CD8-positive, alpha-beta memory T cell (primary cell): ENCODE measurements at regions of chr19 and their contacts with region 1.

Region 1: GRCh38 chr19:39119554-39120229 is 5.9 kb upstream of the PAK4 start:
- DNase-seq: no peak
- H3K4me3 ChIP-seq: no peak overlapping the region
- H3K4me3 Mint-ChIP-seq: no peak overlapping the region
- H3K27ac ChIP-seq: no peak overlapping the region
- H3K27ac Mint-ChIP-seq: no peak overlapping the region
- H3K4me1 ChIP-seq: no peaks in the 10 kb centered on the region
- H3K4me1 Mint-ChIP-seq: peaks cover 6 to 12% (median 11%) of the 10 kb centered on the region in 3 donors
- H3K27me3 ChIP-seq: no peaks in the 10 kb centered on the region
- H3K27me3 Mint-ChIP-seq: peaks cover 3 to 6% of the 10 kb centered on the region in 2 donors

Region 2: DNA sequence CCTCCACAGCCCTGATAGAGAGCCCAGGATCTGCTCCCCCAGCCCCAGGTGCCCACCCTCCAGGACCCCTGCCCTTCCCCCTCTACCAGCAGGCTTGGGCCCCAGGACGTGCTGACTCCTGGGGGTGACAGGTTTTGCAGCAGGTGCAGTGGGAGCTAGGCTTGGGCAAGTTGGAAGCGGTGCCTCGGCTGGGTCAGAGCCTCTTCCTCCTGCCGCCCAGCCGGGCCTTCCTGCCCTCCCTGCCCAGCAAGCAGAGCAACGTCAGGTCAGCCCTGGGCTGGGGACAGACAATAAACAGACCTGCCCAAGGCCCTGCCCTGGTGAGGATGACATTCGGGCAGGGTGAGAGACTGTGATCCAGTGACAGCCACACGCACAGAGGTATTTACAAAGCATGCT is 67.9 kb after region 1 on chr19:
- CTCF ChIA-PET with region 1: interaction called, 14 read pairs
- POLR2A ChIA-PET with region 1: no interaction called
- DNase-seq: no peak
- H3K4me3 ChIP-seq: no peak overlapping the region
- H3K4me3 Mint-ChIP-seq: no peak overlapping the region
- H3K27ac ChIP-seq: no peak overlapping the region
- H3K27ac Mint-ChIP-seq: no peak overlapping the region
- H3K4me1 ChIP-seq: no peaks in the 10 kb centered on the region
- H3K4me1 Mint-ChIP-seq: no peaks in the 10 kb centered on the region
- H3K27me3 ChIP-seq: no peaks in the 10 kb centered on the region
- H3K27me3 Mint-ChIP-seq: peaks cover 8 to 26% of the 10 kb centered on the region in 2 donors

Region 3: GRCh38 chr19:39328046-39328705 is 208.5 kb after region 1 on chr19:
- CTCF ChIA-PET with region 1: interaction called, 13 read pairs
- POLR2A ChIA-PET with region 1: interaction called, 3 read pairs
- DNase-seq: peak; percentile 64 to 87 (median 75)
- H3K4me3 ChIP-seq: no peak overlapping the region
- H3K4me3 Mint-ChIP-seq: peak overlapping the region in 4 of 7 donors; percentile 30 to 67 (median 63)
- H3K27ac ChIP-seq: no peak overlapping the region
- H3K27ac Mint-ChIP-seq: peak overlapping the region; percentile 47 to 97 (median 86)
- H3K4me1 ChIP-seq: peaks cover 49% of the 10 kb centered on the region
- H3K4me1 Mint-ChIP-seq: peaks cover 28 to 59% (median 48%) of the 10 kb centered on the region in 3 donors
- H3K27me3 ChIP-seq: no peaks in the 10 kb centered on the region
- H3K27me3 Mint-ChIP-seq: no peaks in the 10 kb centered on the region

Region 4: DNA sequence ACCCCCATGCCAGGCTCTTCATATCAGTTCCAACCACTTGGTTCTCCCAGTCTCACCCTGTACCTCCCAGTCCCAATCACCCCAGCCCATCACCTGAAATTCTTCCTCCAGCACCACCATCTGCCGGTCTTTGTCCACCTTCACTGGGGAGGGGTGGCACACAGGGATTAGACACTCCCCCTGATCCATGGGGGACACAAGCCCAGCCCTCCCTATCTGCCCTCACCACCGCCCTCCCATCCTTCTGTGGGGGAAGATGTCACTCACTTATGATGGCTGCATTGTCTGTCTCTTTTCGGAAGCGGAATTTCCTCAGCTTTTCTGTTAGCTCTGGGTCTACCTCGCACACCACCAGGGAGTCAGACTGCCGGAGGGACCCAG is 215.5 kb after region 1 on chr19:
- CTCF ChIA-PET with region 1: interaction called, 10 read pairs
- POLR2A ChIA-PET with region 1: no interaction called
- DNase-seq: peak in 1 of 5 donors; percentile 24
- H3K4me3 ChIP-seq: peak overlapping the region; percentile 99
- H3K4me3 Mint-ChIP-seq: peak overlapping the region; percentile 97 to 100 (median 99)
- H3K27ac ChIP-seq: peak overlapping the region; percentile 92
- H3K27ac Mint-ChIP-seq: peak overlapping the region; percentile 91 to 100 (median 97)
- H3K4me1 ChIP-seq: peaks cover 59% of the 10 kb centered on the region
- H3K4me1 Mint-ChIP-seq: peaks cover 42 to 75% (median 66%) of the 10 kb centered on the region in 3 donors
- H3K27me3 ChIP-seq: no peaks in the 10 kb centered on the region
- H3K27me3 Mint-ChIP-seq: no peaks in the 10 kb centered on the region